ENCODE measurements at regions of chr20 and their contacts with region 1.

Region 1: GRCh38 chr20:11067359-11067758 is 393.6 kb upstream of the JAG1 start:
- DNase-seq: no peak
- ATAC-seq: peak in 3 of 4 donors; percentile 71 to 86 (median 77)
- H3K4me3 ChIP-seq: no peak overlapping the region
- H3K27ac ChIP-seq: peak overlapping the region in 6 of 12 donors; percentile 17 to 69 (median 35)
- H3K4me1 ChIP-seq: peaks cover 0 to 37% (median 11%) of the 10 kb centered on the region in 12 donors
- H3K27me3 ChIP-seq: no peaks in the 10 kb centered on the region
- CTCF ChIP-seq: no peak
- POLR2A ChIP-seq: no peak

Region 2: GRCh38 chr20:10982692-10983091 is 84.7 kb before region 1 on chr20:
- intact Hi-C with region 1: loop called in 1 of 10 experiments (anchors 5 kb)
- DNase-seq: peak; percentile 55 to 88 (median 73)
- ATAC-seq: peak; percentile 97 to 99 (median 99)
- H3K4me3 ChIP-seq: peak overlapping the region in 1 of 12 donors; percentile 14
- H3K27ac ChIP-seq: peak overlapping the region in 11 of 12 donors; percentile 41 to 79 (median 66)
- H3K4me1 ChIP-seq: peaks cover 0 to 41% (median 16%) of the 10 kb centered on the region in 12 donors
- H3K27me3 ChIP-seq: no peaks in the 10 kb centered on the region
- CTCF ChIP-seq: no peak
- POLR2A ChIP-seq: no peak

Measured in heart left ventricle (tissue), 16 donors.